Activated CD8-positive, alpha-beta T cell treated with anti-CD3 and anti-CD28 coated beads, Interleukin-2, amount 10 ng/mL, durations not matched to agents 7 days and 5 days (primary cell): ENCODE measurements at regions of chr1 and their contacts with region 1.

Region 1: GRCh38 chr1:203702130-203702577 is 62.8 kb upstream of the LAX1 start:
- DNase-seq: peak; percentile 73
- ATAC-seq: peak; percentile 70
- H3K4me3 Mint-ChIP-seq: no peak overlapping the region
- H3K27ac Mint-ChIP-seq: peak overlapping the region; percentile 63
- H3K4me1 Mint-ChIP-seq: peaks cover 30% of the 10 kb centered on the region
- H3K27me3 Mint-ChIP-seq: no peaks in the 10 kb centered on the region

Region 2: GRCh38 chr1:203593723-203594122 is 108.4 kb before region 1 on chr1:
- CTCF ChIA-PET with region 1: interaction called, 38 read pairs
- POLR2A ChIA-PET with region 1: interaction called, 3 read pairs
- DNase-seq: peak; percentile 70
- ATAC-seq: peak; percentile 88
- H3K4me3 Mint-ChIP-seq: no peak overlapping the region
- H3K27ac Mint-ChIP-seq: peak overlapping the region; percentile 51
- H3K4me1 Mint-ChIP-seq: peaks cover 31% of the 10 kb centered on the region
- H3K27me3 Mint-ChIP-seq: peaks cover 7% of the 10 kb centered on the region

Region 3: GRCh38 chr1:203612932-203613682 is 89.0 kb before region 1 on chr1:
- CTCF ChIA-PET with region 1: interaction called, 32 read pairs
- POLR2A ChIA-PET with region 1: no interaction called
- DNase-seq: peak; percentile 51
- ATAC-seq: peak; percentile 76
- H3K4me3 Mint-ChIP-seq: peak overlapping the region; percentile 48
- H3K27ac Mint-ChIP-seq: peak overlapping the region; percentile 79
- H3K4me1 Mint-ChIP-seq: peaks cover 61% of the 10 kb centered on the region
- H3K27me3 Mint-ChIP-seq: no peaks in the 10 kb centered on the region

Region 4: DNA sequence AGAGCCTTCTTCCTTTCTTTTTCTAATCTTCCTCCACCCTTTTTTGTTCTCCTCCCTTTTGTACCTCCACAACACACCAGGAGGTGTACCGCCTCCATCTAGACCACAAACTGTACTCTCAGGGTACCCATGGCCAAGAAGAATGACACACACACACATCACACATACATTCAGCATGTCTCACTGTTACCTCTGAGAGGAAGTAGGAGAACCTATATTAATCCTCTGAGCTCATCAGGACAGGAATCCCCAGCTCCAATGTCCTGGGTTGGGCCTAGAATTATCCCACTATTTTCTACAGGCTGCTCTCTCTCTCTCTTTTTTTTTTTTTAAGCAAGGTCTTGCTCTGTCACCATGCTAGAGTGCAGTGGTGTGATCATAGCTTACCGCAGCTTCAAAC is 38.9 kb before region 1 on chr1:
- CTCF ChIA-PET with region 1: interaction called, 21 read pairs
- POLR2A ChIA-PET with region 1: no interaction called
- DNase-seq: no peak
- ATAC-seq: peak; percentile 57
- H3K4me3 Mint-ChIP-seq: no peak overlapping the region
- H3K27ac Mint-ChIP-seq: peak overlapping the region; percentile 26
- H3K4me1 Mint-ChIP-seq: peaks cover 70% of the 10 kb centered on the region
- H3K27me3 Mint-ChIP-seq: no peaks in the 10 kb centered on the region

Region 5: GRCh38 chr1:204003529-204003928 is 301.4 kb after region 1 on chr1:
- CTCF ChIA-PET with region 1: no interaction called
- POLR2A ChIA-PET with region 1: no interaction called
- DNase-seq: no peak
- ATAC-seq: no peak
- H3K4me3 Mint-ChIP-seq: no peak overlapping the region
- H3K27ac Mint-ChIP-seq: no peak overlapping the region
- H3K4me1 Mint-ChIP-seq: peaks cover 4% of the 10 kb centered on the region
- H3K27me3 Mint-ChIP-seq: peaks cover 6% of the 10 kb centered on the region